ENCODE measurements at regions of chr6 and their contacts with region 1.

Region 1: GRCh38 chr6:87472525-87473418 is at the start of gene SLC35A1:
- DNase-seq: peak; percentile 88
- ATAC-seq: peak; percentile 97
- H3K4me3 Mint-ChIP-seq: peak within 1 kb of the TSS; percentile 97
- H3K27ac Mint-ChIP-seq: peak within 1 kb of the TSS; percentile 98
- H3K4me1 Mint-ChIP-seq: peaks cover 12% of the 10 kb centered on the region
- H3K27me3 Mint-ChIP-seq: peaks cover 6% of the 10 kb centered on the region
- CTCF ChIP-seq: no peak
- total RNA-seq, gene SLC35A1: 7.5 and 8.7 TPM in 2 replicates

Region 2: DNA sequence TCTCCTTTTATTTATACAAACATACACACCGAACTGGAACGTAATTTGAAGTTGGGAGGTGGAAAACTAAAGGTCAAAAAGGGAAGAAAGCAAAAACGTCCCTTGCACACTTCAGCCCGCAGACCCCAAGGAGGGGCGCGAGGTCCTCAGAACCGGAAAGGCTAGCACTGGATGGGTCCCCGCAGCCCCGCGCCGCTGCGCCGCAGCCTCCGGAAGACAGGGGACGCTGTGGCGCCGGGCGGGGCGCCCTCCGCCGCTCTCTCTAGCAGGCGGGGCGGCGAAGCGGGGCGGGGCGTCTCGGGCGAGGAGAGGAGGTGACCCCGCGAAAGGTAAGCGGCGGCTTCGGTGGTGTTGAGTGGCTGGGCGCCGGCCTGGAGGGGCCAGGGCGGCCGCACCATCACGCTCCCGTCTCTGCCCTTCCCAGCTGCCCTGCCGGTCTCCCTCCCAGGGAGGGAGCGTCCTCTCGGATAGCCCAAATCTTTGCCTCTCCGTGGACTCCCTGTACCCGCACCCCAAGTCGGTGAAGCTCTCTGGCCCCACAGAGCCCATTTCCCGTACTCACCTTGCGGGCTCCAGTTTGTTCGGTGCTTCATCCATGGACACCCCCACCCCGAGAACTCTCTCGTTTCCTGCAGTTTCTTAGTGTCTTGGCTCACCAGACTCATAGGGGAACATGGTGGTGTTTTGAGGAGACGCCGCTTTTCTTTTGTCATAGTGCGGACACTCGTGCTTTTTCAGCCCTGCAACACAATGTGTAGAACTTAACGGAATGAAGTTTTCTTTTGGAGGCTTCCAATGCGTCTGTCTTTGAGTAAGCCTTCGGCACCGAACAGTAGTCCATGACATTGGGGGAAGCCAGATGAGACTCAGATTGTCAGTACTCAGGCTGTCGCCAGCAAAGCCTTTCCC is 150.2 kb before region 1 on chr6 and contains the start of gene SMIM8:
- CTCF ChIA-PET with region 1: no interaction called
- POLR2A ChIA-PET with region 1: interaction called, 3 read pairs
- intact Hi-C with region 1: loop called (anchors 1 kb)
- DNase-seq: peak; percentile 89
- ATAC-seq: peak; percentile 100
- H3K4me3 Mint-ChIP-seq: peak within 1 kb of the TSS; percentile 98
- H3K27ac Mint-ChIP-seq: peak within 1 kb of the TSS; percentile 90
- H3K4me1 Mint-ChIP-seq: peaks cover 25% of the 10 kb centered on the region
- H3K27me3 Mint-ChIP-seq: no peaks in the 10 kb centered on the region
- CTCF ChIP-seq: peak; percentile 79
- total RNA-seq, gene SMIM8: 11.1 and 14.4 TPM in 2 replicates

Region 3: GRCh38 chr6:87407901-87408720 is 64.7 kb before region 1 on chr6 and contains the start of gene CFAP206:
- CTCF ChIA-PET with region 1: no interaction called
- POLR2A ChIA-PET with region 1: interaction called, 8 read pairs
- intact Hi-C with region 1: loop called (anchors 1 kb)
- DNase-seq: peak; percentile 80
- ATAC-seq: peak; percentile 80
- H3K4me3 Mint-ChIP-seq: peak within 1 kb of the TSS; percentile 87
- H3K27ac Mint-ChIP-seq: peak within 1 kb of the TSS; percentile 79
- H3K4me1 Mint-ChIP-seq: peaks cover 9% of the 10 kb centered on the region
- H3K27me3 Mint-ChIP-seq: peaks cover 8% of the 10 kb centered on the region
- CTCF ChIP-seq: no peak
- total RNA-seq, gene CFAP206: 0.09 TPM in 1 of 2 replicates, not detected in the other

Region 4: DNA sequence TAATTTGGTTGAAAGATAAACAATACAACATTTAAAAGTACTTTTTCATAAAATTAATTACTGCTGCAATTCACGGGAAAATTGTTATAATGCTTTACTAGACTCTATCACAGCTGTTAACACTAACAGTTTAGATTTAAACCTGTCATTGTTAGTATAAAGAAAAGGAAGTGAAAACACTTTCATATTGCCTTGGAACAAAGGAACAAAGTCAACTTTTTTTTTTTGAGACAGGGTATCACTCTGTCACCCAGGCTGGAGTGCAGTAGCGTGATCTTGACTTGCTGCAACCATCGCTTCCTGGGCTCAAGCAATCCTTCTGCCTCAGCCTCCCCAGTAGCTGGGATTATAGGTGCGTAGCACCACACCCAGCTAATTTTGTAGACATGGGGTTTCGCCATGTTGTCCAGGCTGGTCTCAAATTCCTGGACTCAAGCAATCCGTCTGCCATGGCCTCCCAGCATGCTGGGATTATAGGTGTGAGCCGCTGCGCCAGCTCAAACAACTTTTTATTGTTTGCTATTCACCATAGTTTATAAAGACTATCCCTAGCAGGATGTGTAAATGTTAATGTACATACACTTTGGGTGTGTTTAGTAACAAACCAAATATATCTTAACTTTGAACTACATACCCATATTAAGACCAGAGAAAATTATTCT is 22.1 kb after region 1 on chr6:
- CTCF ChIA-PET with region 1: no interaction called
- POLR2A ChIA-PET with region 1: interaction called, 3 read pairs
- intact Hi-C with region 1: loop called (anchors 1 kb)
- DNase-seq: no peak
- ATAC-seq: peak; percentile 93
- H3K4me3 Mint-ChIP-seq: peak overlapping the region; percentile 46
- H3K27ac Mint-ChIP-seq: peak overlapping the region; percentile 74
- H3K4me1 Mint-ChIP-seq: peaks cover 16% of the 10 kb centered on the region
- H3K27me3 Mint-ChIP-seq: no peaks in the 10 kb centered on the region
- CTCF ChIP-seq: no peak

Region 5: GRCh38 chr6:87922947-87923330 is 450.2 kb after region 1 on chr6:
- CTCF ChIA-PET with region 1: no interaction called
- POLR2A ChIA-PET with region 1: no interaction called
- intact Hi-C with region 1: loop called (anchors 2 kb)
- DNase-seq: peak; percentile 39
- ATAC-seq: peak; percentile 81
- H3K4me3 Mint-ChIP-seq: peak overlapping the region; percentile 33
- H3K27ac Mint-ChIP-seq: peak overlapping the region; percentile 88
- H3K4me1 Mint-ChIP-seq: peaks cover 87% of the 10 kb centered on the region
- H3K27me3 Mint-ChIP-seq: no peaks in the 10 kb centered on the region
- CTCF ChIP-seq: no peak

Region 6: GRCh38 chr6:88165844-88166492 is 693.2 kb after region 1 on chr6 and contains the start of gene CNR1:
- CTCF ChIA-PET with region 1: no interaction called
- POLR2A ChIA-PET with region 1: no interaction called
- intact Hi-C with region 1: loop called (anchors 10 kb)
- DNase-seq: no peak
- ATAC-seq: peak; percentile 59
- H3K4me3 Mint-ChIP-seq: peak within 1 kb of the TSS; percentile 91
- H3K27ac Mint-ChIP-seq: peak within 1 kb of the TSS; percentile 87
- H3K4me1 Mint-ChIP-seq: peaks cover 34% of the 10 kb centered on the region
- H3K27me3 Mint-ChIP-seq: peaks cover 15% of the 10 kb centered on the region
- CTCF ChIP-seq: no peak
- total RNA-seq, gene CNR1: 2.7 and 4.4 TPM in 2 replicates

Region 7: GRCh38 chr6:88870717-88871330 is 1398.1 kb after region 1 on chr6:
- CTCF ChIA-PET with region 1: no interaction called
- POLR2A ChIA-PET with region 1: no interaction called
- intact Hi-C with region 1: loop called (anchors 5 kb)
- DNase-seq: no peak
- ATAC-seq: peak; percentile 42
- H3K4me3 Mint-ChIP-seq: no peak overlapping the region
- H3K27ac Mint-ChIP-seq: no peak overlapping the region
- H3K4me1 Mint-ChIP-seq: peaks cover 10% of the 10 kb centered on the region
- H3K27me3 Mint-ChIP-seq: no peaks in the 10 kb centered on the region
- CTCF ChIP-seq: no peak